GM12878 (cell line): ENCODE measurements at regions of chr19 and their contacts with region 1.

Region 1: DNA sequence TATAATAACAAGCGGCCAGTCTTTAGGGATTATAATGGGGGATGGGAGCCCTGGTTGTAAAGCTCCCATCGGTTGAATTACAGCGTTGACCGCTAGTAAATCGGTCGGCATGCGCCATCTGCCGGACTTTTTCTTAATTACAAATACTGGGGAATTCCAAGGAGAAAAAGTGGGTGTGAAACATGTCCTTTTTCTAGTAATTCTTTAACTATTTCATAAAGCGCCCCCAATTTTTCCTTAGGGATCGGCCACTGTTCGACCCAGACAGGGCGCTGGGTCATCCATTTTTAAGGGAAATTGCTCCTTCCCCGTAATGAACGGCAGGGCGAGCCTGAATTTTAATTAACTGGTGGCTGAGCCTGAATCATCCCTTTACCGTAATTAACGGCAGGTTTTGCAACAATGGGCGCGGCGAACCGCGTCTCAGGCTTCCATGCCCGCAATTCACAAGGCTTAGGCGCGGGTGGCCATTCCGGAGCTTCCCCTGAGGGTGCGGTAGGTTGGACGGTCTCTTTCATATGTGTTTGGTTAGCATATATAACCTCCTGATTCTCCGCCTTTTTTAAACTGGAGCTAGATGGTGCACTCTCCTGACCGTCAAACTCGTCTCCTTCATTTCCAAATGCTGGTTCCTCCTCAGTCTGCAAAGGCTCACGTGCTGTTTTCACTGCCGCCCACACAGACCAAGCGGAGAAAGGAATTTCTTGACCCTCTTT is 30.2 kb upstream of the EVI5L start:
- DNase-seq: no peak
- ATAC-seq: peak; percentile 88
- H3K4me3 ChIP-seq: peak overlapping the region; percentile 9; the same call in 1 of the 2 replicates
- H3K27ac ChIP-seq: no peak overlapping the region
- H3K4me1 ChIP-seq: 0 out of 2 replicates have a peak, but pooled peaks cover 3% of the 10 kb centered on the region
- H3K27me3 ChIP-seq: no peaks in the 10 kb centered on the region
- CTCF ChIP-seq: peak; percentile 40 to 55 (median 49); a peak in 5 of 6 replicates
- EP300 ChIP-seq: no peak
- POLR2A ChIP-seq: no peak
- RAD21 ChIP-seq: peak; percentile 81

Region 2: DNA sequence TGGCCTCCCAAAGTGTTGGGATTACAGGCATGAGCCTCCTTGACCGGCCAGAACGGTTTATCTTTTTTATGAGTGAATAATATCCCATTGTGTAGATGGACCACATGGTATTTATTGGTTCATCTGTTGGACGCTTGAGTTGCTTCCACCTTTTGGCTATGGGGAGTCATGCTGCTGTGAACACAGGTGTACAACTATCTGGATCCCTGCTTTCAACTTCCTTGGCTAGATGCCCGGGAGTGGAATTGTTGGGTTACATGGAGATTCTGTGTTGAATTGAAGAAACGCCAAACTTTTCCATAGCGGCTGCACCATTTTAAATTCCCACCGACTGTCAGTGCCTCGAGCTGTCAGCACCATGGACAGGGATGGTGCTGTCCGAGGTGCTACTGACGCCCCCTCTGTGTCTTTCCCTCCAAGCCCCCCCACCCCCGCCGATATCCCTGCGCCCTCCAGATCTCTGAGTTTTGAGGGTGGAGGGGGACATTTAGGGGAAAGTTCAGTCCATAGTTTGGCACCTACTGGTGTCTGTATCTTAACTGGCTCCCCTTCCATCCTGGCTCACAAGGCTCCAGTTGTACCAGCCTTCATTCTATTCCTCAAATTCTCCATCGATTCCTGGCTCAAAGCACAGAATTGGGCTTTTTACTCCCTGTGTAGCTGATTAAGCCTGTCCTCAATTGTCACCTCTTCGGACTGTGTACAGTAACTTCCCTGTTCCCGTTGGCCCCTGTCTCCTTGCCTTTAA is 237.0 kb before region 1 on chr19:
- CTCF ChIA-PET with region 1: interaction called, 42 read pairs
- POLR2A ChIA-PET with region 1: no interaction called
- RAD21 ChIA-PET with region 1: interaction called, 48 read pairs
- SMC1A ChIA-PET with region 1: interaction called, 24 read pairs
- in situ Hi-C with region 1: loop called (anchors 5 kb)
- intact Hi-C with region 1: loop called (anchors 1 kb)
- DNase-seq: no peak
- ATAC-seq: no peak
- H3K4me3 ChIP-seq: no peak overlapping the region
- H3K27ac ChIP-seq: no peak overlapping the region
- H3K4me1 ChIP-seq: no peaks in the 10 kb centered on the region
- H3K27me3 ChIP-seq: no peaks in the 10 kb centered on the region
- CTCF ChIP-seq: no peak
- EP300 ChIP-seq: no peak
- POLR2A ChIP-seq: no peak
- RAD21 ChIP-seq: no peak

Region 3: GRCh38 chr19:7652061-7652641 is 147.6 kb before region 1 on chr19:
- CTCF ChIA-PET with region 1: interaction called, 27 read pairs
- POLR2A ChIA-PET with region 1: no interaction called
- RAD21 ChIA-PET with region 1: interaction called, 8 read pairs
- SMC1A ChIA-PET with region 1: interaction called, 20 read pairs
- in situ Hi-C with region 1: no loop called
- intact Hi-C with region 1: loop called (anchors 1 kb)
- DNase-seq: peak; percentile 48
- ATAC-seq: peak; percentile 87
- H3K4me3 ChIP-seq: no peak overlapping the region
- H3K27ac ChIP-seq: no peak overlapping the region
- H3K4me1 ChIP-seq: peaks cover 7% of the 10 kb centered on the region
- H3K27me3 ChIP-seq: no peaks in the 10 kb centered on the region; a peak in 1 of 4 replicates
- CTCF ChIP-seq: peak; percentile 91 to 97 (median 95)
- EP300 ChIP-seq: no peak
- POLR2A ChIP-seq: no peak
- RAD21 ChIP-seq: peak; percentile 60

Region 4: DNA sequence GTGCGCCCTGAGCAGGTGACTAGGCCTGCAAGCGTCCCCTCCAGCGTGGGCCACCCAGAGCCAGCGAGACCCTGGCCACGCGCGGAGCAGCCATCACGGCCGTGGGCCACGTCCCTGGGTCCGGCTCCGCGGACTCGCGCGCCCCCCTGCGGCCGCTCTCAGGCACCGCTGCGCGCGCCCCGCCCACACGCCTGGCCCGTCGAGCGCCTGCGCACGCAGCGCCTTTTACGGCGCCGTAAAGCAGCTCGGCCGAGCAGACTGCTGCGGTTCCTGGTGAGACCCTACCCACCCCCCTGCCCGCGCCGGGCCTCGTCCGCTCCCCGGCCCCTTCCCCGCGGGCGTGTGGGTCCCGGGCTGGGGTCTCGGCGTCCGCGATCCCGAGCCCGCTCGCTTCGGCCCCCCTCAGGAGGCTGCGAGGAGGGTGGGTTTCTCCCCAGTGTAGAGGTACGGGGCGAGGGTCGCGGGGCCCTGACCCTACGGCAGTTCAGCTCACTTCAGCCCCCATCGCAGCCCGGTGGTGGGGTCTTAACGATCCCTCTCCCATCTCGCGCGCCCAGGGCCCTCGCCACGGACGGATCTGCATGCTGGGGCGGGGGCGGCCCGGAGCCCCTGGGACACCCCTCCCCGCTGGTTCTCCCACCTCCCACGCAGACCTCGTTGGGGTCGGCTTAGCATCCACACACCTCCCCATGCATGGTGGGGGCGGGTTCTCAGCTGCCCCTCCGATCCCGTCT is 119.0 kb before region 1 on chr19 and contains the start of gene TRAPPC5:
- CTCF ChIA-PET with region 1: interaction called, 40 read pairs
- POLR2A ChIA-PET with region 1: interaction called, 9 read pairs
- RAD21 ChIA-PET with region 1: interaction called, 17 read pairs
- SMC1A ChIA-PET with region 1: interaction called, 14 read pairs
- in situ Hi-C with region 1: no loop called
- intact Hi-C with region 1: loop called (anchors 1 kb)
- DNase-seq: no peak
- ATAC-seq: peak; percentile 79
- H3K4me3 ChIP-seq: peak within 1 kb of the TSS; percentile 85
- H3K27ac ChIP-seq: peak within 1 kb of the TSS; percentile 97
- H3K4me1 ChIP-seq: peaks cover 39% of the 10 kb centered on the region
- H3K27me3 ChIP-seq: no peaks in the 10 kb centered on the region
- CTCF ChIP-seq: peak; percentile 64 to 97 (median 94); a peak in 4 of 6 replicates
- EP300 ChIP-seq: no peak
- POLR2A ChIP-seq: 0 out of 2 replicates have a peak, but pooled peaks have one; percentile 65
- RAD21 ChIP-seq: peak; percentile 75
- polyA plus RNA-seq, gene TRAPPC5: 4.2 to 22.5 TPM

Region 5: GRCh38 chr19:7699417-7700401 is 100.1 kb before region 1 on chr19:
- CTCF ChIA-PET with region 1: interaction called, 17 read pairs
- POLR2A ChIA-PET with region 1: interaction called, 4 read pairs
- RAD21 ChIA-PET with region 1: interaction called, 14 read pairs
- SMC1A ChIA-PET with region 1: interaction called, 6 read pairs
- in situ Hi-C with region 1: no loop called
- intact Hi-C with region 1: no loop called
- DNase-seq: peak; percentile 73
- ATAC-seq: peak; percentile 40
- H3K4me3 ChIP-seq: peak overlapping the region; percentile 100
- H3K27ac ChIP-seq: peak overlapping the region; percentile 94
- H3K4me1 ChIP-seq: peaks cover 47% of the 10 kb centered on the region
- H3K27me3 ChIP-seq: no peaks in the 10 kb centered on the region
- CTCF ChIP-seq: no peak
- EP300 ChIP-seq: peak in 1 of 2 experiments; percentile 34; a peak in 1 of 4 replicates
- POLR2A ChIP-seq: peak; percentile 55; the same call in 1 of the 2 replicates
- RAD21 ChIP-seq: no peak

Region 6: DNA sequence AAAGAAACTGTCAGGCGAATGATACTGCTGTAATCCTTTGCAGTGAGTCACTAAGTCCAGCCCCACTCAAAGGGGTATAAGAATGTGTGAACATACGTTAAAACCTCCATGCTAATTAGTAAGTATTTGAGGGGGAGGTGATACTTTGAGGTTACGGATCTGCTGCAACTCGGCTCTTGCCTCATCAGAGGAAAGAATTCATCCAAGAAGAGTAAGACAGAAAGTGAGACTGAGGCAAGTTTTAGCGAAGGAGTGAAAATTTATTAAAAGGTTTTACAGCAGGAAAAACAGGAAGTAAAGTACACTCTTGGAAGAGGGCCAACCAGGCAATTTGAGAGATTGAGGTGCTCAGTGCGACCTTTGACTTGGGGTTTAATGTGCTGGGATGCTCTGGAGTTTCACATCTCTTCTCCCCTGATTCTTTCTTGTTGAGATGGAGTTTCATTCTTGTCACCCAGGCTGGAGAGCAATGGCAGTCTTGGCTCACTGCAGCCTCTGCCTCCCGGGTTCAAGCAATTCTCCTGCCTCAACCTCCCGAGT is 27.0 kb before region 1 on chr19:
- CTCF ChIA-PET with region 1: interaction called, 6 read pairs
- POLR2A ChIA-PET with region 1: interaction called, 6 read pairs
- RAD21 ChIA-PET with region 1: interaction called, 7 read pairs
- SMC1A ChIA-PET with region 1: interaction called, 3 read pairs
- in situ Hi-C with region 1: no loop called
- intact Hi-C with region 1: loop called (anchors 1 kb)
- DNase-seq: peak; percentile 68
- ATAC-seq: peak; percentile 97
- H3K4me3 ChIP-seq: no peak overlapping the region
- H3K27ac ChIP-seq: no peak overlapping the region
- H3K4me1 ChIP-seq: peaks cover 17% of the 10 kb centered on the region
- H3K27me3 ChIP-seq: no peaks in the 10 kb centered on the region
- CTCF ChIP-seq: no peak
- EP300 ChIP-seq: peak; percentile 62 to 80; a peak in 3 of 4 replicates
- POLR2A ChIP-seq: no peak
- RAD21 ChIP-seq: no peak

Region 7: DNA sequence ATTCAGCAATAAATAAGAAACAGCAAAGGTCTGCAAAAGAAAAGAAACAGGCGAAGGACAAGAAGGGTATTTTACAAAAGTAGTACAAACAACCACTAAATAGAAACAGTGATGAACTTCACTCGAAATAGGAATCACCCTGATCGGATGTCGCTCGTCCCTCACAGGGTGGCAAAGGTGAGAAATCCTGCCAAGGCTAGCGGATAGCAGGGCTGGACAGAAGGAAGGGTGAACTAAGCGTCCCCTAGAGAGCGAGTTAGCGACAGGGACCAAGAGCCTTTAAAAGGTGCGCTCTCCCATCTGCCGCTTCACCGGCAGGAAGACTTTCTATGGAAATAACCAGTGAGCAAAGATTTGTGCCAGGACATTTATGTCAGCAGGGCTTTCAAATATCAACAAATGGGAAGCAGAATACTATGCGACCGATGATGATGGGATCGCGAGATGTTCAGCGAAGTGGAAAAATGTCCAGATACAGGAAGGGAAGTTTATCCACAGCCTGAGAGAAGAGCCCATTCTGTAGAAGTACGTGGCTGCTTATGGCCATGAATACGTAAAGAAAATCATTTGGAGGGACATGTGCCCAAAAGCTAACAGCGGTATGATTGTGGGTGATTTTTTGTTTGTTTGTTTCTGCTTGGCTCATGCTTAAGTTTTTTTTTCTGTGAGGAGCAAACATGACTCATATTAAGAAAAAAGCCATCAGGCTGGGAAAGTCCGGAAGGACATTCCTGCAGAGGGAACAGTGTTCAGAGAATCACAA is 186.7 kb after region 1 on chr19:
- CTCF ChIA-PET with region 1: no interaction called
- POLR2A ChIA-PET with region 1: no interaction called
- RAD21 ChIA-PET with region 1: no interaction called
- SMC1A ChIA-PET with region 1: no interaction called
- in situ Hi-C with region 1: no loop called
- intact Hi-C with region 1: no loop called
- DNase-seq: no peak
- ATAC-seq: no peak
- H3K4me3 ChIP-seq: no peak overlapping the region
- H3K27ac ChIP-seq: no peak overlapping the region
- H3K4me1 ChIP-seq: no peaks in the 10 kb centered on the region; the same call in 1 of the 2 replicates
- H3K27me3 ChIP-seq: no peaks in the 10 kb centered on the region
- CTCF ChIP-seq: no peak
- EP300 ChIP-seq: no peak
- POLR2A ChIP-seq: no peak
- RAD21 ChIP-seq: no peak